ENCODE measurements at regions of chr18 and their contacts with region 1.

Region 1: DNA sequence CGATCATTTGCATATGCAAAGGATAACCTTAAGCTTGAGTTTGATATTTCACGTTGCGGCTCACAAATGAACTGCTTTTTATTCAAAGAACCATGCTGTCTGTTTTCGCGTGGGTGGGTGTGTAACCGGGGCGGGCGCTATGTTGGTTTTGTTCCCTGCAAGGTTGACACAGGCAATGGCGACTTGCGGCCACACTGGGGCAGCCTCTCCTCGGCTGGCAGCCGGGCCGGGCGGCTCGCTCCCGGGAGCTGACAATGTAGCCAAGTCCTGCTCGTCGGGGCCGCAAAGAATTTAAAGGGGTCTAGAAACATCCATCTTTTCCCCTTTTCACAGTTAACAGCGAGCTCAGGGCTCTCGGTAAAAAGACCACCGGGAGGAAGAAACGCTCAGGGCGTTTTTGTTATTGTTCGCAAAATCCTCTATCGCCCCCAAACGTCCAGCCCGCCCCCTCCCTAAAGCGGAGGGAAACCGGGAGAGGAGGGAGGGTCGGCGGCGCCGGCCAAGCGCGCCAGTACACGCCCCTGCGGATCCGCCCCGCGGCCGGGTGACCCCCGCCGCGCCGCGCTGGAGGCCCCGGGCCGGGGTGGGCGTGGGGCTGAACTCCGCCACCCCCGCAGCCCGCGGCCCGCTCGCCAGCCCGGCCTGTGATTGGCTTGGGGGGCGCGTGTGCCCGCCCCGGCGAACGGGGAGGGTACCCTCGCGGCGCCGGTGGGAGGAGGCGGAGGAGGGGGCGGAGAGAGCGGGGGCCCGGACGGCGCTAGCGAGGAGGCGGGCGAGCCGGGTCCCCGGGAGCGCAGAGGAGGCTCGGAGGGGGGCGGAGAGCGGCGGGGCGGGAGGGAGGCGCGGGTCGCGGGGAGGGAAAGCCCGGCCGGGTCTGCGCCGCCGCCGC is at the start of gene NEDD4L:
- DNase-seq: peak; percentile 89
- ATAC-seq: peak; percentile 86
- H3K4me3 ChIP-seq: peak within 1 kb of the TSS; percentile 51 to 98 (median 87)
- H3K4me3 Mint-ChIP-seq: peak within 1 kb of the TSS; percentile 98
- H3K27ac ChIP-seq: peak within 1 kb of the TSS; percentile 63 to 71
- H3K27ac Mint-ChIP-seq: peak within 1 kb of the TSS; percentile 96
- H3K4me1 ChIP-seq: peaks cover 14 to 41% of the 10 kb centered on the region in 2 donors
- H3K4me1 Mint-ChIP-seq: peaks cover 36% of the 10 kb centered on the region
- H3K27me3 ChIP-seq: no peaks in the 10 kb centered on the region
- H3K27me3 Mint-ChIP-seq: no peaks in the 10 kb centered on the region
- CTCF ChIP-seq: peak; percentile 81
- total RNA-seq, gene NEDD4L: 25.7 and 29.5 TPM in 2 replicates

Region 2: GRCh38 chr18:57586251-57587049 is 457.3 kb before region 1 on chr18 and contains the start of gene FECH:
- CTCF ChIA-PET with region 1: no interaction called
- POLR2A ChIA-PET with region 1: no interaction called
- intact Hi-C with region 1: loop called (anchors 10 kb)
- DNase-seq: peak; percentile 78
- ATAC-seq: peak; percentile 97
- H3K4me3 ChIP-seq: peak within 1 kb of the TSS; percentile 53 to 67 (median 63)
- H3K4me3 Mint-ChIP-seq: peak within 1 kb of the TSS; percentile 89
- H3K27ac ChIP-seq: peak within 1 kb of the TSS in 1 of 2 donors; percentile 70
- H3K27ac Mint-ChIP-seq: peak within 1 kb of the TSS; percentile 79
- H3K4me1 ChIP-seq: peaks cover 17 to 21% of the 10 kb centered on the region in 2 donors
- H3K4me1 Mint-ChIP-seq: peaks cover 18% of the 10 kb centered on the region
- H3K27me3 ChIP-seq: no peaks in the 10 kb centered on the region
- H3K27me3 Mint-ChIP-seq: no peaks in the 10 kb centered on the region
- CTCF ChIP-seq: no peak
- total RNA-seq, gene FECH: 10.4 and 12.6 TPM in 2 replicates

Region 3: GRCh38 chr18:57833443-57834101 is 210.2 kb before region 1 on chr18:
- CTCF ChIA-PET with region 1: interaction called, 3 read pairs
- POLR2A ChIA-PET with region 1: no interaction called
- intact Hi-C with region 1: loop called (anchors 10 kb)
- DNase-seq: peak; percentile 57
- ATAC-seq: peak; percentile 34
- H3K4me3 ChIP-seq: peak overlapping the region; percentile 28 to 71 (median 43)
- H3K4me3 Mint-ChIP-seq: peak overlapping the region; percentile 85
- H3K27ac ChIP-seq: peak overlapping the region; percentile 57 to 77
- H3K27ac Mint-ChIP-seq: peak overlapping the region; percentile 83
- H3K4me1 ChIP-seq: peaks cover 24 to 31% of the 10 kb centered on the region in 2 donors
- H3K4me1 Mint-ChIP-seq: peaks cover 55% of the 10 kb centered on the region
- H3K27me3 ChIP-seq: no peaks in the 10 kb centered on the region
- H3K27me3 Mint-ChIP-seq: no peaks in the 10 kb centered on the region
- CTCF ChIP-seq: no peak

Region 4: DNA sequence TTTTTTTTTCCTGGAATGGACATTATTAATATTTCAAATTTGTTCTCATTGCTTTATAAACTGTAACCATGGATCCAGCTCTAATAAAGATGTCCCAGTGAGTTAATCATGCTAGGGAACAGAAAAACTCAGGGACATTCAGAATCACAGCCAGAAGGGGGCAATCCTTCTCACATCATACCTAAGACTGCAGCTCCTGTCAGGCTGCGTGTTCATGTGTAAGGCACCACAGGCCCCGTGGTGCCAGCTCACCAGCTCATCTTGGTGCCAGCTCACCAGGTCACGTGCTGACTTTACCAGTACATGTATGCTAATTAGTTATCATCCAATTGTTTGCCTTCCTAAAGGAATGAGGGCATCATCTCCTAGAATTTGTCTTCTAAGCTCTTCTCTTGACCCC is 84.5 kb before region 1 on chr18:
- CTCF ChIA-PET with region 1: interaction called, 26 read pairs
- POLR2A ChIA-PET with region 1: interaction called, 3 read pairs
- intact Hi-C with region 1: loop called (anchors 10 kb)
- DNase-seq: peak; percentile 62
- ATAC-seq: peak; percentile 82
- H3K4me3 ChIP-seq: no peak overlapping the region
- H3K4me3 Mint-ChIP-seq: no peak overlapping the region
- H3K27ac ChIP-seq: no peak overlapping the region
- H3K27ac Mint-ChIP-seq: no peak overlapping the region
- H3K4me1 ChIP-seq: no peaks in the 10 kb centered on the region
- H3K4me1 Mint-ChIP-seq: peaks cover 2% of the 10 kb centered on the region
- H3K27me3 ChIP-seq: peaks cover 0 to 3% (median 2%) of the 10 kb centered on the region in 4 experiments
- H3K27me3 Mint-ChIP-seq: peaks cover 2% of the 10 kb centered on the region
- CTCF ChIP-seq: peak; percentile 49

Region 5: GRCh38 chr18:58087917-58088692 is 44.4 kb after region 1 on chr18:
- CTCF ChIA-PET with region 1: no interaction called
- POLR2A ChIA-PET with region 1: no interaction called
- intact Hi-C with region 1: loop called (anchors 5 kb)
- DNase-seq: no peak
- ATAC-seq: no peak
- H3K4me3 ChIP-seq: no peak overlapping the region
- H3K4me3 Mint-ChIP-seq: no peak overlapping the region
- H3K27ac ChIP-seq: no peak overlapping the region
- H3K27ac Mint-ChIP-seq: no peak overlapping the region
- H3K4me1 ChIP-seq: peaks cover 11% of the 10 kb centered on the region in 2 donors
- H3K4me1 Mint-ChIP-seq: peaks cover 17% of the 10 kb centered on the region
- H3K27me3 ChIP-seq: no peaks in the 10 kb centered on the region
- H3K27me3 Mint-ChIP-seq: no peaks in the 10 kb centered on the region
- CTCF ChIP-seq: no peak

Region 6: DNA sequence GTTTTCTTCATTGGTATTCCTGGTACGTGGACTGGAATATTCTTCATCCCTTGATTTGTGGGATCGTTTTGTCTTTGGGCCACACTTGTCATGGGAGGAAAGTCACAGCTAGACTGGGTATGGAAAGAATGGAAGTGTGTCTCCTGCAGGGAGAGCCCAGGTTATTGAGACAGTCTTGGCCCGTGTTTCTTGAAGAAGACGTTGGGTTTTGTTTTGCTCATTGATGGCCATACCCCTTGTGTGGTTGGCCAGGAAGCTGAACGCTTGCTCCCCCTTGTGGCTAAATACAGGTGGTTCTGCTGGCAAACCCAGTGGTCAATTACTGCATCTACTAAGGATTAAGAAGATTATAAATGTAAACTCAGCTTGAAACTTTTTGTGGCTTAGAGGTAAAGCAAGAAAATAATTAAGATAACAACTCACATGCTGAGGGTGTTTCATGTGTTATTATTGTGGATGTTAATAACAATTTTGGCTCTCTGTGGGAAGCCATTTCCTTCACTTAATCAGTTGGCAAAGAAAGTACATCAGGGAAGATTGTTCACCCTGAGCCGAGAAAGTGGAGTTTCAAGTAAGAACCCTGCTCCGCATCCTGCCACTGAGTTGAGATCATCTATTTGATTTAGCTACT is 92.1 kb after region 1 on chr18:
- CTCF ChIA-PET with region 1: interaction called, 15 read pairs
- POLR2A ChIA-PET with region 1: no interaction called
- intact Hi-C with region 1: loop called (anchors 1 kb)
- DNase-seq: peak; percentile 75
- ATAC-seq: peak; percentile 71
- H3K4me3 ChIP-seq: no peak overlapping the region
- H3K4me3 Mint-ChIP-seq: peak overlapping the region; percentile 48
- H3K27ac ChIP-seq: no peak overlapping the region
- H3K27ac Mint-ChIP-seq: no peak overlapping the region
- H3K4me1 ChIP-seq: peaks cover 10 to 13% of the 10 kb centered on the region in 2 donors
- H3K4me1 Mint-ChIP-seq: peaks cover 19% of the 10 kb centered on the region
- H3K27me3 ChIP-seq: peaks cover 0 to 4% (median 0%) of the 10 kb centered on the region in 4 experiments
- H3K27me3 Mint-ChIP-seq: peaks cover 4% of the 10 kb centered on the region
- CTCF ChIP-seq: peak; percentile 87

Region 7: GRCh38 chr18:59358712-59359575 is 1315.2 kb after region 1 on chr18 and contains the start of gene LMAN1:
- CTCF ChIA-PET with region 1: no interaction called
- POLR2A ChIA-PET with region 1: no interaction called
- intact Hi-C with region 1: loop called (anchors 2 kb)
- DNase-seq: peak; percentile 91
- ATAC-seq: peak; percentile 96
- H3K4me3 ChIP-seq: peak within 1 kb of the TSS; percentile 72 to 93 (median 81)
- H3K4me3 Mint-ChIP-seq: peak within 1 kb of the TSS; percentile 96
- H3K27ac ChIP-seq: peak within 1 kb of the TSS; percentile 56 to 80
- H3K27ac Mint-ChIP-seq: peak within 1 kb of the TSS; percentile 90
- H3K4me1 ChIP-seq: peaks cover 16 to 21% of the 10 kb centered on the region in 2 donors
- H3K4me1 Mint-ChIP-seq: peaks cover 36% of the 10 kb centered on the region
- H3K27me3 ChIP-seq: no peaks in the 10 kb centered on the region
- H3K27me3 Mint-ChIP-seq: peaks cover 5% of the 10 kb centered on the region
- CTCF ChIP-seq: no peak
- total RNA-seq, gene LMAN1: 41.1 and 48.8 TPM in 2 replicates

Measured in B cell (primary cell).